ENCODE measurements at regions of chr2 and their contacts with region 1.

Region 1: DNA sequence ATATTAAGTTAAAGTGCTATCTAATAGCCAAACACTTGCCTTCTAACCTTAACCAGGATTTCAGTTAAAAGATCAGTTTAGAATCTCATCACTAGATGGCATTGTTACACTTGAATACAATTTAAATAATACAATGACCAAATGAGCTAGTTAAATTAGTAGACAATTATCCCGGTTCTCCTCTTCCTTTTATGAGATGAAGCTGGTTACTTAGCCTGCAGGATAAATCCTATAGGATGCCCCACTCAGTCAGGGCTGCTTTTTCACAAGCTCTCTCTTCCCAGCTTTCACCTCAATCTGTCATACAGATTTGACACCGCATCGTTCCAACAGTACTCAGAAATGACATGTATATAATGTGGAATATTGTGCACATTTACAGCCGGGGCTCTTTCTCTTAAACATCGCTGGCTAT is 678.8 kb downstream of the KCNJ3 start:
- DNase-seq: no peak
- H3K4me3 Mint-ChIP-seq: no peak overlapping the region
- H3K27ac Mint-ChIP-seq: no peak overlapping the region
- H3K4me1 Mint-ChIP-seq: no peaks in the 10 kb centered on the region
- H3K27me3 Mint-ChIP-seq: no peaks in the 10 kb centered on the region
- CTCF ChIP-seq: peak; percentile 14

Region 2: GRCh38 chr2:155363349-155363888 is 13.9 kb before region 1 on chr2:
- CTCF ChIA-PET with region 1: no interaction called
- intact Hi-C with region 1: no loop called
- DNase-seq: no peak
- H3K4me3 Mint-ChIP-seq: no peak overlapping the region
- H3K27ac Mint-ChIP-seq: no peak overlapping the region
- H3K4me1 Mint-ChIP-seq: no peaks in the 10 kb centered on the region
- H3K27me3 Mint-ChIP-seq: no peaks in the 10 kb centered on the region
- CTCF ChIP-seq: no peak

Region 3: DNA sequence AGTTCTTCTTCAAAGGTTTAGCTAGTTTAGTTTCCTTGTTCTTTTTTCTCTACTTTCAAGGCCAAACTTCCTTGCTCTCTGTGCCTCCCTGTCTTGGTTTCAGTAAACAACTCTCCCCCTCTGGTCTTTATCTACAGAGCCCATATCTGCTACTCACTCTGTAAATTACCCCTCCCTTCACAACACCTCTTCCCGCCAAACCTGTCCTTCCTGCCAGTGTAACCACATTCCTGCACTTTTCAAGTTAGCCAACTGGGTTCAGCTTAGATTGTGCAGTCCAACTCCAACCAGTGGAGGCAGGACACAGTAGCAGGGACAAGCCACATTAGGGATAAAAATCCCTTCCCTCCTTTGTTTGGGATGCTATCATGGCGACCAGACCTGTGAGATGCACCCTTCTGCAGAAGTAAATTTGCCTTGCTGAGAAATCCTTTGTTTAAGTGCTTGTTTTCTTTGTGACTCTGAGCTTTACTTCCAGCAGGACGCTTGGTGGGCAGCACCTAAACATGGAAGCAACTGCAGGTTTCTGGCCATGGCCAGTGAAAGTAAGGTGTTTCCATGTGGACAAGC is 27.2 kb after region 1 on chr2:
- CTCF ChIA-PET with region 1: no interaction called
- intact Hi-C with region 1: no loop called
- DNase-seq: no peak
- H3K4me3 Mint-ChIP-seq: no peak overlapping the region
- H3K27ac Mint-ChIP-seq: no peak overlapping the region
- H3K4me1 Mint-ChIP-seq: no peaks in the 10 kb centered on the region
- H3K27me3 Mint-ChIP-seq: no peaks in the 10 kb centered on the region
- CTCF ChIP-seq: no peak

Region 4: DNA sequence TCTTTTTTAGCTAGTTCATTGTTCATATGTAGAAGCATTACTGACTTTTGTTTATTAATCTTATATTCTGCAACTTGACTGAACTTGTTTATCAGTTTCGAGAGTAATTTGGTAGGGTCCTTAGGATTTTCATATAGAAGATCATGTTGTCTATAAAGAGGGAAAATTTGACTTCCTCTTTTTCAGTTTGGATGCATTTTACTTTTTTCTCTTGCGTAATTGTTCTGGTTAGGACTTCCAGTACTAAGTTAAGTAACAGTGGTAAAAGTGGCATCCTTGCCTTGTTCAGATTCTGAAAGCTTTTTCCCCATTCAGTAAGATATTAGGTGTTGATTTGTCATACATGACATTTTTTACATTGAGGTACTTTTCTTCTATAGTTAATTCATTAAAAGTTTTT is 47.2 kb after region 1 on chr2:
- CTCF ChIA-PET with region 1: no interaction called
- intact Hi-C with region 1: no loop called
- DNase-seq: no peak
- H3K4me3 Mint-ChIP-seq: no peak overlapping the region
- H3K27ac Mint-ChIP-seq: no peak overlapping the region
- H3K4me1 Mint-ChIP-seq: no peaks in the 10 kb centered on the region
- H3K27me3 Mint-ChIP-seq: no peaks in the 10 kb centered on the region
- CTCF ChIP-seq: no peak

Region 5: GRCh38 chr2:155690785-155691184 is 313.5 kb after region 1 on chr2:
- CTCF ChIA-PET with region 1: no interaction called
- intact Hi-C with region 1: loop called (anchors 5 kb)
- DNase-seq: no peak
- H3K4me3 Mint-ChIP-seq: no peak overlapping the region
- H3K27ac Mint-ChIP-seq: no peak overlapping the region
- H3K4me1 Mint-ChIP-seq: no peaks in the 10 kb centered on the region
- H3K27me3 Mint-ChIP-seq: no peaks in the 10 kb centered on the region
- CTCF ChIP-seq: no peak

Region 6: DNA sequence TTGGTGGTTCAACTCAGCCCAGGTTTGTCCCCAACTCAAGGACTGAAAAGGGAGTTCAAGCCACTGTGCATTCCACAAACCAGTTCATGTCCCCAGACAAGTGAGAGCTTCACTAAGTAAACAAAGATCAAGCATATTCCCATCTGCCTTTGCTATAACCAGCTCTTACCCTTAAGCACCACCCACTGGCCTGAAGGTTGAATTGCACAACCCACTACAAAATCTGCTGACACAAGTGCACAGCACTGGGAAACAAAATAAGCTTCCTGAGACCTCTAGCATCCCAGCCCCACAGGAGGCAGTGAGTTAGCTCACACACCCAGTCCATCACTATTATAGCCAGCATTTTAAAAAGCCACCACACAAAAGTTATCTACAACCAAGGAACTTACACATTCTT is 438.6 kb after region 1 on chr2:
- CTCF ChIA-PET with region 1: interaction called, 7 read pairs
- intact Hi-C with region 1: loop called (anchors 1 kb)
- DNase-seq: peak; percentile 32
- H3K4me3 Mint-ChIP-seq: no peak overlapping the region
- H3K27ac Mint-ChIP-seq: no peak overlapping the region
- H3K4me1 Mint-ChIP-seq: no peaks in the 10 kb centered on the region
- H3K27me3 Mint-ChIP-seq: no peaks in the 10 kb centered on the region
- CTCF ChIP-seq: no peak

Region 7: GRCh38 chr2:156192468-156192867 is 815.2 kb after region 1 on chr2:
- CTCF ChIA-PET with region 1: no interaction called
- intact Hi-C with region 1: loop called (anchors 10 kb)
- DNase-seq: no peak
- H3K4me3 Mint-ChIP-seq: no peak overlapping the region
- H3K27ac Mint-ChIP-seq: no peak overlapping the region
- H3K4me1 Mint-ChIP-seq: no peaks in the 10 kb centered on the region
- H3K27me3 Mint-ChIP-seq: no peaks in the 10 kb centered on the region
- CTCF ChIP-seq: no peak

Region 8: GRCh38 chr2:157336137-157337010 is 1959.1 kb after region 1 on chr2:
- CTCF ChIA-PET with region 1: interaction called, 3 read pairs
- intact Hi-C with region 1: loop called (anchors 10 kb)
- DNase-seq: peak; percentile 55
- H3K4me3 Mint-ChIP-seq: no peak overlapping the region
- H3K27ac Mint-ChIP-seq: no peak overlapping the region
- H3K4me1 Mint-ChIP-seq: no peaks in the 10 kb centered on the region
- H3K27me3 Mint-ChIP-seq: peaks cover 2% of the 10 kb centered on the region
- CTCF ChIP-seq: peak; percentile 48